ENCODE measurements at regions of chr3 and their contacts with region 1.

Region 1: DNA sequence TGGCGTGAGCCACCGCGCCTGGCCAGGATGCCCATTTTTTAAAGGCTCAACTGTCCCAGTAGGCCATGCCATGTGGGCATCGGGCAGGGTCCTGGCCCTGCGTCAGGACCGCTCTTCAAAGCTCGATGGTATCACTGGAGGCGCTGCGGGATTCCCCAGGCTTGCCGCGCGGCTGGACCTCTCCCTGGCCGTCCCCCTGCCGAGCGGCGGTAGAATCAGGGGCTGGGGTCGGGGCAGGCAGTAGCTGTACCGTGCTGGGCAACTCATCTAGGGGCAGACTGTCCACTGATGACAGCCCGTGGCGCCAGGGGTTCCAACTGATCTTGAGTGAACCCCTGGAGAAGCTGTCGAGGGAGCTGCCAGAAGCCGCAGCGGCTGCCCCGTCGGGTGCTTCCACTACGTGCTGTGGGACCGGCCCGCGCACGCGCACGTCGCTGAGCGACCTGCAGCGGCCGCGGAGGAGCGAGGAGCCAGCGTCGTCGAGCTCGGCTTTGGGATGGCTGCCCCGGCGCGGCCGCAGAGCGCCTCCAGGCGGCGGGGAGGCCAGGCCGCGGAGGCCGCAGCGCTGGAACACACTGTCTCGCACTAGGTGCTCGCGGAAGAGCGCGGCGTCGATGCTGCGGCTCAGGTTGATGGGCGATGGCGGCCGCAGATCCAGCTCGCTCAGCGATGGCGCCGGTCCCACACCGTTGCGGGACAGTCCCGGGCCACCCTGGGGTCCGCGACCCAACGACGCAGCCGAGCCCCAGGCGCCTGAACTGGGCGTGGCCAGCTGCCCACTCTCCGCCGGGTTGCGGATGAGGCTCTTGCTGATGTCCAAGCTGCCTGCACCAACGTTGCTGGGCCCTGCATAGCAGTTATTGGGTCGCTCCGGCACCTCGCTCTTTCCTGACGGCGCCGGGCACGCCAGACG is 5.8 kb downstream of the PRRT3 start:
- DNase-seq: peak; percentile 74 to 91
- H3K4me3 ChIP-seq: peak overlapping the region; percentile 72
- H3K27ac ChIP-seq: no peak overlapping the region
- H3K4me1 ChIP-seq: peaks cover 6% of the 10 kb centered on the region
- H3K27me3 ChIP-seq: no peaks in the 10 kb centered on the region
- CTCF ChIP-seq: peak; percentile 71

Region 2: GRCh38 chr3:9715764-9716437 is 230.5 kb before region 1 on chr3:
- CTCF ChIA-PET with region 1: no interaction called
- POLR2A ChIA-PET with region 1: no interaction called
- intact Hi-C with region 1: loop called (anchors 10 kb)
- DNase-seq: peak; percentile 68 to 77
- H3K4me3 ChIP-seq: no peak overlapping the region
- H3K27ac ChIP-seq: no peak overlapping the region
- H3K4me1 ChIP-seq: no peaks in the 10 kb centered on the region
- H3K27me3 ChIP-seq: peaks cover 47% of the 10 kb centered on the region
- CTCF ChIP-seq: peak; percentile 92

Region 3: DNA sequence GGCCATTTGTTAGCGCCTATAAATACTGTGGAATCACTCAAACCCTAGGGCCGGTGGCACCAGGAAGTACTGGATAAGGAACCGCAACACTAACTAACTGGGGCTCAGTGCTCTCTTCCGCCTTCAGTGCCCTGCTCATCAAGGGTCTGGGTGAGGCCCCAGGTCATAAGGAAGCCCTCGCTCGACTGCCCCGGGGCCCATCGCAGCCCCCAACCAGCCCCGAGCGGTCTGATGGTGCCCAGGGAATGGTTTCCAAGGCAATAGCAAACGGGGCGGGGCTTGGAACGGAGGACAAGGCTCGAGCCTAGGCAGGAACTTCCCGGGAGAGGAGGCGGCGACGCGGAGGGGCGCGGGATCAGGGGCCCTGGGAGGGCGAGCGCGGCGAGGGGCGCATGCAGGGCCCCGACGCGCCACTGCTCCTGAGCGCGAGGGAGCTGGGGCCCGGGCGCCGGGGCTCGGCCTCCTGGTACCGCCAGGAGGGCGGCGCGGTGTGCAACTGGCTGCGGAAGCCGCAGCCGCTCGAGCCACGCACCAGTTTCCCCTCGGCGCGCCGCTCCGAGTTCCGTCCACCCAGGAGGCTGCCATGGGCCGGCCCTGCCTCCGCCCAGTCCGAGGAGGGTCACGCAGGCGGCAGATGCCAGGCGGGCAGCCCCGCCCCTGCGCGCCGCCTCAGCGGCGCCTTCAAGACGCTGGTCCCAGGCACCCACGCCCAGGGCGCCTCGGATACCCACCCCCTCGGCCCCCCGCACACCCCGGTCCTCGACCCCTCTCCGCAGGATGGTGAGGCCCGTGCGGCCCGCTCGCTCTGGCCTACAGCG is 136.5 kb before region 1 on chr3 and contains the start of gene TTLL3:
- CTCF ChIA-PET with region 1: no interaction called
- POLR2A ChIA-PET with region 1: interaction called, 3 read pairs
- intact Hi-C with region 1: loop called (anchors 2 kb)
- DNase-seq: peak in 1 of 2 experiments; percentile 62
- H3K4me3 ChIP-seq: peak within 1 kb of the TSS; percentile 66
- H3K27ac ChIP-seq: peak within 1 kb of the TSS; percentile 62
- H3K4me1 ChIP-seq: peaks cover 19% of the 10 kb centered on the region
- H3K27me3 ChIP-seq: no peaks in the 10 kb centered on the region
- CTCF ChIP-seq: no peak
- total RNA-seq, gene TTLL3: 21.7 and 35.8 TPM in 2 replicates

Region 4: DNA sequence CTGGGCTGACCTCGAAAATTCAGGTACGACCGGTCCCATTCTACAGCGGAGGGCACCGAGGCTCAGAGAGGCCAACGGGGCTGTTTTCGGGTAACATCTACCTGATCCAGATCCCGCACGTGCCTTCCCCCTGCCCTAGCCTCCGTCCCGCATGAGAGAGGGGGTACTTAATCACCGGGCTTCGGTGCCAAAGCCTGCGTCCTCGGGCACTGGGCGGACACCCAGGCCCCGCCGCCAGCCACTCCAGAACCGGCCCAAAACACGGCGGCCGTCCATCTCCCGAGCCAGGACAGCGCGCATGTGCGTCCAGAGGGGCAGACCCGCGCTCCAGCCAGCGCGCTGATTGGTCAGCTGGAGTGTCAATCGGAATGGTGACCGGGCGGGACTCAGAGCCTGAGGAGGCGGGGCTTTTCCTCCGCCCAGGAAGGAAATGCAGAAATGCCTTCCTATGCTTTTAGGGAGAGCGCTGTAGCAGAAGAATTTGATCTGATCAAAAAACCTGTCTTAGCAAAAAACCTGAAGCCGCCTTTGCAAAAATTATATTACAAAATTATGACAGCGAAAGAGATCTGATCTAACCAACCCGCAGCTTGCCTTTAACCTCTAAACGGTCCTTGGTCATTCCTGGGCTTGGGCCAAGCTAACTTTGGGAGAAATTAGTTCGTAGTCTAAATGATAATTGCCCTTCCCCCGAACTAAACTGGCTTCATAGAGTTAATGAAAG is 102.5 kb before region 1 on chr3 and contains the start of gene RPUSD3:
- CTCF ChIA-PET with region 1: interaction called, 3 read pairs
- POLR2A ChIA-PET with region 1: interaction called, 3 read pairs
- intact Hi-C with region 1: loop called (anchors 2 kb)
- DNase-seq: peak; percentile 79 to 97
- H3K4me3 ChIP-seq: peak within 1 kb of the TSS; percentile 66
- H3K27ac ChIP-seq: peak within 1 kb of the TSS; percentile 16; the same call in 1 of the 2 replicates
- H3K4me1 ChIP-seq: peaks cover 20% of the 10 kb centered on the region
- H3K27me3 ChIP-seq: no peaks in the 10 kb centered on the region
- CTCF ChIP-seq: no peak
- total RNA-seq, gene RPUSD3: 53.2 and 57.7 TPM in 2 replicates

Region 5: DNA sequence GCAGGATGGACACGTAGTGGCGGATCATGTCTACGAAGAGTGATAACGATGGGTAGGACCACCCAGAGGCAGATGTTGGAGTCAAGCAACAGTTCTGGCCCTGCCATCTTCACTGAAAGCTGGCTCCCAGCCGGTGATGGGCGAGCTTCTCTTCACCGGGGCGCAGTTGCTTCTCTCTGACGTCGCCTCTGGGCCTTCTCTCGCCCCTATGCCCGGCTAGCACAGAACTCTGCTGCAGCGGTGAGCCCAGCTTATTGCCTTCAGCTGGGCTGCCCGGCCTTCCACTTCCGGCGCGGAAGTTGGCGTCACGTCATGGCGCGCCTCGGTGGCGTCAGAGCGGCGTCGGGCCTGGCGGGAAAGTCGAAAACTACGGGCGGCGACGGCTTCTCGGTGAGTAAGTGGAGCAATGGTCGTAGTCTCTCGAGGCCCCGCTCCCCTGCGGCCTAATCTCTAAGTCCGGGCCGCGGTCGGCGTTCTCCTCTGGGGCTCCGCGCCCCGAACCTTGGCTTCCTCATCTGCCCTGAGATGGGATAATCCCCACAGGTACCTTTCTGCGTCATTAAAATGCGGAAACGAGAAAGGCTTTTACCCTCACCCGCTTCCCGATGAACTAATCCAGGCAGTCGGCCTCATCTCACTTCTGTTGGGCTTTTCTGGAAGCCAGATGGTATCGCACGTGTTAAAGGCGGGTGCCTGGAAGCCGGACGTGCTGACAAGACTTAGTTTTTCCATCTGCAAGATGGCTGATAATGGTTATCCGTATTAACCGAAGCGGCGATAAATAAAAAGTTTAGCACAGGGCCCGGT is 79.9 kb after region 1 on chr3 and contains the start of gene FANCD2:
- CTCF ChIA-PET with region 1: no interaction called
- POLR2A ChIA-PET with region 1: interaction called, 7 read pairs
- intact Hi-C with region 1: loop called (anchors 1 kb)
- DNase-seq: peak; percentile 65 to 86
- H3K4me3 ChIP-seq: peak within 1 kb of the TSS; percentile 75
- H3K27ac ChIP-seq: peak within 1 kb of the TSS; percentile 54
- H3K4me1 ChIP-seq: peaks cover 29% of the 10 kb centered on the region
- H3K27me3 ChIP-seq: no peaks in the 10 kb centered on the region
- CTCF ChIP-seq: no peak
- total RNA-seq, gene FANCD2: 35.7 and 52.2 TPM in 2 replicates